ENCODE measurements at regions of chr11 and their contacts with region 1.

Region 1: GRCh38 chr11:19553683-19554333 is 158.8 kb upstream of the NAV2 start:
- DNase-seq: peak; percentile 84
- H3K4me3 ChIP-seq: no peak overlapping the region
- H3K27ac ChIP-seq: no peak overlapping the region
- H3K4me1 ChIP-seq: no peaks in the 10 kb centered on the region
- H3K27me3 ChIP-seq: no peaks in the 10 kb centered on the region
- CTCF ChIP-seq: peak; percentile 77

Region 2: DNA sequence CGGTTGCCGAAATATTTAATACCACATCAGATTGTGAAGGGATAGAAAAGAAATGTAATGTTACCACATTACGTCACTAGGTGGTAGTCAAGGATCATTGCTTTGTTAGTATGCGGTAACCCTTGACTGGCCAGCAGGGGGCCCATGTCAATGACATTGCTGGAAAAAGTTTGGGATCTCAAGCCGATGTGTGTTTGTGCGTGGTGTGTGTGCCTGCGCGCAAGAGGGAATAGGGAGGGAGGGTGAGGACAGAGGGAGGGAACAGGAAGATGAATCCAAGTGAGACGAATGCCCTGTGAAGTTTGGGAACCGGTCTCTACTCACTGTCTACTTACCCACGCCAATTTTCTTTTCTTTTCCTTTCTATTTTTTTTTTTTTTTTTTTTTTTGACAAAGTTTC is 482.6 kb before region 1 on chr11:
- intact Hi-C with region 1: loop called (anchors 1 kb)
- DNase-seq: peak; percentile 82
- H3K4me3 ChIP-seq: no peak overlapping the region
- H3K27ac ChIP-seq: no peak overlapping the region
- H3K4me1 ChIP-seq: peaks cover 4% of the 10 kb centered on the region
- H3K27me3 ChIP-seq: no peaks in the 10 kb centered on the region
- CTCF ChIP-seq: peak; percentile 81

Region 3: DNA sequence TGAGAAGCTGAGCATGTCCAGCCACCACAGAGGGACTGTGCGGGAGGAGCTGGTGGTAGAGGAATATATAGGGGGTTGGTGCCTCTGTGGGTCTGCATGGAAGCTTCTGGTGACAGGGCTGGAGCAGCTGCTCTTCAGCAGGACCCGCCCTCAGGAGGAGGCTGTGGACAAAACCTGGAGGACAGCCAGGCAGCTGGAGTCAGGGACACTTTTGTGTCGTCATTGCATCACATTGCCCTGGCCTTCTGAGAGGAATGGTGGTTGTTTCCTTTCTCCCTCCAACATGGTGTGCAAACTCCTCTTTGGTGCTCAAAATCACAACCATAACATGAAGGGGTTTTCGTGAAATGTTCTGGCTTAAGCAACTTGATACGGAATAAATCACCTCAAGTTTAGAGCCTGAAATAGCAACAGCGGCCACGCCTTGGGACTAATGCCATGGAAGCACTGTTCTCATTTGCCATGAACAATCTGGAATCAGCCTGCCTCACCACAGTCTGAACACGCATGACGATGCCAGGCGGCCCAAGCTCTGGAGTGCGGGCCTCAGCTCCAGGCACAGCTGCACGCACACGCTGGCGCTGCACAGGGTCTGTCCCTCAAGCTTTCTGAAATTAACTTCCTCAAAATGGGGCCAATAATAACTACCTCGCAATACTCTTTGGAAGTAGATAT is 334.9 kb before region 1 on chr11:
- intact Hi-C with region 1: no loop called
- DNase-seq: no peak
- H3K4me3 ChIP-seq: no peak overlapping the region
- H3K27ac ChIP-seq: no peak overlapping the region
- H3K4me1 ChIP-seq: no peaks in the 10 kb centered on the region
- H3K27me3 ChIP-seq: no peaks in the 10 kb centered on the region
- CTCF ChIP-seq: no peak

Region 4: DNA sequence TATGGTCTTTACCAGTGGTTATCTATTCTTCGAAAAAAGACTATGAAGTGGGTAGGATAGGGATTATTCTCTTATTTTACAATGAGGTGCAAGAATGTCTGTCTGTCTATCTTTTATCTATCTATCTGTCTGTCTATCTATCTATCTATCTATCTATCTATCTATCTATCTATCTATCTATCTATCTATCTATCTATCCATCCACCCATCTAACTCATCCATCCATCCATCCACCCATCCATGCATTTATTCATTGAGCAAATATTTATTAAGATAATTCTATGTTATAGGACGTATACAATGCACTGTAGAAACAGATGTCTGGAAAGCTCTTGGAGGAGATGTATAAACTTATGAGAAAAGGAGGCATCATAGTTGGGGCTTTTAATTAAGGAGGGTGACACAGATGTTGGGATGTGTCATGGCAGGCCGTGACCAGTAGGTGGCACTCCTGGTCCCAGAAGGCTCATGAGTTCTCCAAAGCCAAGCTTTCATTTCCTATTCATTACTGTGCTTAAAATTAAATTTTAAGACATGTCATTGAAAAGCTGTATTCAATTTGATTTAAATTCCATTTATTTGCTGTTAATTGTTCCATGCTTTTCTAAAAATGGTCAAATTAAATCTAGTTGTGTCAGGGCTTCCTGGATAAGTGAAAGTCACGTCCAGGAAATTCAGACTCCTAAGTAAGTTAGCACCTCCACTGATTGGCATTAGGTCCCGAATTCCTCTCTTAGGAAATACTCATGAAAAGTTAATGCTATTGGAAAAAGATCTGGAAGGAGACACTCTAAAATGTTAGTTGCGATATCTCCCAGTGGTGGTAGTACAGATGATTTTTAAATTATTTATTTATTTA is 294.1 kb before region 1 on chr11:
- intact Hi-C with region 1: loop called (anchors 2 kb)
- DNase-seq: peak; percentile 78
- H3K4me3 ChIP-seq: no peak overlapping the region
- H3K27ac ChIP-seq: no peak overlapping the region
- H3K4me1 ChIP-seq: no peaks in the 10 kb centered on the region
- H3K27me3 ChIP-seq: no peaks in the 10 kb centered on the region
- CTCF ChIP-seq: peak; percentile 97

Region 5: GRCh38 chr11:19311308-19312030 is 242.3 kb before region 1 on chr11:
- intact Hi-C with region 1: loop called (anchors 5 kb)
- DNase-seq: peak; percentile 78
- H3K4me3 ChIP-seq: no peak overlapping the region
- H3K27ac ChIP-seq: no peak overlapping the region
- H3K4me1 ChIP-seq: no peaks in the 10 kb centered on the region
- H3K27me3 ChIP-seq: no peaks in the 10 kb centered on the region
- CTCF ChIP-seq: peak; percentile 82

Region 6: DNA sequence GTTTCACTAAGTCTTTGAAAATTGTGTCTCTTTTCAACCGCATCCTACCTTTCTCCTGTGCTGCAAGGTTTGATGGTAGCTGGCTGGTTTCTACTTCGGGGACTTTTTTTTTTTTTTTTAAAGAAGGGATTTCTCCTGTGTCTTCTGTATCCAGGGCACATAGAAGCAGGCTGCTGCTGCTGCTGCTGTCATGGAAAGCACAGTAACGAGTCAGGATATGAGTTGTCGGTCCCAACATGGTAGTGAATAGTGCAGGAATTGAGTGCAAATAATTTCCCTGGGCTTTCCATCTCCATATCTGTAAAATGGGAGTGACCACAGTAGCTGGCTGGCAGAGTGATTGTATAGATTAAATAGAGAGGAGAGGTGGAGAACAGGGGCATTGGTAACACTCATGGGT is 40.5 kb after region 1 on chr11:
- intact Hi-C with region 1: no loop called
- DNase-seq: no peak
- H3K4me3 ChIP-seq: no peak overlapping the region
- H3K27ac ChIP-seq: no peak overlapping the region
- H3K4me1 ChIP-seq: no peaks in the 10 kb centered on the region
- H3K27me3 ChIP-seq: no peaks in the 10 kb centered on the region
- CTCF ChIP-seq: no peak

Region 7: DNA sequence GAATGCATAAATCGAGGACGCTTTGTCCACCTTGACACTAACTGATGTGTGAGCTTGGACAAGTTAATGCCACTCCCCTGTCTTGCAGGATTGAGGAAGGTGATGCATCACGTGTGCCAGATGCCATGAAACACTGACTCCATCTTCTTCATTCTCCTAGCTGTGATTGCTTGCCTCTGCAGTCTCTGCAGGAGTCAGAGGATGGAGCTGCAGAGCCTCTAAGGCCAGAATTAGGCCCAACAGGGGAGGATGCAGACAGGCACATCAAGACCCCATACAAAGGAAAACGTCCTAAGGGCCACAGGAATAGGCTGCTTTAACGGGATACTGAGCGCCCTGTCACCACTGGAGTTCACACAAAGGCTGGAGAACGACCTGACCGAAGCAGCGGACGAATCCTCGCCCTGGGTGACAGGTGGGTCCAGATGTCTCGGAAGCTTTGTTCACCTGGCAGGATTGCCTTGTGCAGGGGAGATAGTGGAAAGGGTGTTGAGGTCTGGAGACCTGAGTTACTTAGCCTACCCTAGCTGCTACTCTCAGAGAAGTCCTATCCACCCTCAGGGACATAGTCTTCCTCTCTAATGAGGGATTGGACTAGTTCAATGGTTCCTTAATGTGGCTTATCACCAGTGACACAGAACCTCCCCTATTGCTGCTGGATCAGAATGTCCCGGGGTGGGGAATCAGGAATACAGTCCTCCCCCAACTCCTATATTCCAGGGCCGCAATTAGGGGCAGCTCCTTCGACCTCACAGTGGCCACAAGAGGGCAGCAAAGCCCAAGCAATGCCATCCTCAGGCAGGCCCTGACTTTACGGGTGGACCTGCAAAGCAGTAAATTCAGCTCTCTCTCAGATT is 574.1 kb after region 1 on chr11:
- intact Hi-C with region 1: loop called (anchors 10 kb)
- DNase-seq: peak; percentile 77
- H3K4me3 ChIP-seq: no peak overlapping the region
- H3K27ac ChIP-seq: no peak overlapping the region
- H3K4me1 ChIP-seq: no peaks in the 10 kb centered on the region
- H3K27me3 ChIP-seq: no peaks in the 10 kb centered on the region
- CTCF ChIP-seq: peak; percentile 76

Region 8: DNA sequence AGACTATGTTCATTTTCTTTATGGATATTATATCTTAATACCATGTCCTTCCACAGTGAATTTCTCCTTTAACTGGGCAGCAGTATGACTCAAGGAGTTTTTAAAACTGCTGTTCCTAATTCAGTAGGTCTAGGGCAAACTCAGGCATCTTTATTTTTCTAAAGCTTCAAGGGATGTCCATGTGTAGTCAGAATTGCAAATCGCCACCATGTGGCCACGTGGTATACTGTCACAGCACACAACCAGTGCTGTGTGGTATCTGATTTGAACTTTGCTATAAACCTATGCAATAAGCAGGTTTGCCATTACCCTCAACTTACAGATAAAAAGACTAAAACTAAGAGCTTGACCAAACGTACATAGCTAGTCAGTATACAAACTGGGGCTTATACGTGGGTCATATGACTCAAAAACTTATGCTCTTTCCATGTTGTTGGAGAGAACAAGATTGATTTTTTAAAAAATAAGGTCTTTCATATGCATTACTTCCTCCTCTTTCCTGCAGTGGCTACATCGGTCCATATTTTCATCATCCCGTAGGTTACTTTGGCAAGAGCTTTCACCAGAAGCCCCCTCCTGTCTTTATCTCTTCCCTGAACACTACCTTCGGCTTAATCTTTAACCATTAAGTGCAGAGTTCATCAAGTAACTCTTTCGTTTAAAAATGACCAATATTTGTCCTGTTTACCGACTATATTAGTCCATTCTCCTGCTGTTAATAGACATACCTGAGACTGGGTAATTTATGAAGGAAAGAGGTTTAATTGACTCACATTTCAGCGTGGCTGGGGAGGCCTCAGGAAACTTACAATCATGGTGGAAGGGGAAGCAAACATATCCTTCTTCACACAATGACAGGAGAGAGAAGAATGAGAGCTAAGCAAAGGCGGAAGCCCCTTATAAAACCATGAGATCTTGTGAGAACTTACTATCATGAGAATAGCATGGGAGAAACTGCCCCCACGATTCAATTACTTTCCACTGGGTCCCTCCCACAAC is 801.7 kb after region 1 on chr11:
- intact Hi-C with region 1: loop called (anchors 10 kb)
- DNase-seq: peak; percentile 63
- H3K4me3 ChIP-seq: no peak overlapping the region
- H3K27ac ChIP-seq: no peak overlapping the region
- H3K4me1 ChIP-seq: no peaks in the 10 kb centered on the region
- H3K27me3 ChIP-seq: no peaks in the 10 kb centered on the region
- CTCF ChIP-seq: peak; percentile 38

Measured in colonic mucosa (tissue), 4 donors.